Astrocyte of the cerebellum (primary cell): ENCODE measurements at regions of chr3 and their contacts with region 1.

Region 1: DNA sequence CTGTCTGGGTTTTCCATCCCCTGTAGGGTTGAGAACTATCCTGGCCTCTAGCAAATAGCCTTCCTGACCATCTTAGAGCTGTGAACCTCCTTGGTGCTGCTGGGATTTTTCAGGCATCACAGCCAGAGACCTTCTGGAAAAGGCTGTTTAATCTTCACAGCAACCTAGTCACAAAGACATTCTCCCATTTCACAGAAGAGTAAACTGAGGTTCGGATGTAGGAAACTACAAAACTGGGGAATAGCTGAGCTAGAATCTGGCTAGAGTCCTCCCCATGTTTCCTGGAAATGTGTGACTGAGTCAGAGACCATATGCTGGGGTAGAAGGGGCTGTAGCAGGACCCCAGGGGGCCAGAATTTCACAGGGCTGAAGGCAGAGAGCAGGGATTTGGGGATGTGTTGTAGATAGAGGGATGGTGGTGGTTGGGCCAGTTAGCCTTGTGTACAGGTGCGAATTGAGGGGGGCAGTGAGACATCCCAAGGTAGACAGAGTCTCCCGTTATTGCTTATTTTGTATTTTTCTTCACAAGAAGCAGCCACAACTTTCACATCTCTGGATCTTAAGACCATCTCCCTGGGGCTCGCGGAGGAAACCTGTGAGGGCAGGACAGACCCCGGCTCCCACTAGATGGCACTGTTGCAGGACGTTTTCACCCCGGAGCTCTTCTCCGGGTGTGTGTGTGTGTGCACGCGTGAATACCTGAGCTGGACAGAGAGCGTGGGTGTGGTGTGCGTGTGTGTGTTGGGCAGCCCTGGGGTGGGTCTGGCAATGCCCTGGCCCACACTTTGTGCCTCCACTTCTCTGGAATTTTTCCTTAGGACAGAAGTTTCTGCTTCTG is 66.9 kb upstream of the PRR23C start:
- DNase-seq: peak; percentile 23
- H3K4me3 ChIP-seq: no peak overlapping the region
- CTCF ChIP-seq: peak; percentile 95

Region 2: GRCh38 chr3:139319428-139320402 is 208.1 kb after region 1 on chr3:
- in situ Hi-C with region 1: loop called (anchors 10 kb)
- DNase-seq: no peak
- H3K4me3 ChIP-seq: no peak overlapping the region
- CTCF ChIP-seq: peak; percentile 44

Region 3: DNA sequence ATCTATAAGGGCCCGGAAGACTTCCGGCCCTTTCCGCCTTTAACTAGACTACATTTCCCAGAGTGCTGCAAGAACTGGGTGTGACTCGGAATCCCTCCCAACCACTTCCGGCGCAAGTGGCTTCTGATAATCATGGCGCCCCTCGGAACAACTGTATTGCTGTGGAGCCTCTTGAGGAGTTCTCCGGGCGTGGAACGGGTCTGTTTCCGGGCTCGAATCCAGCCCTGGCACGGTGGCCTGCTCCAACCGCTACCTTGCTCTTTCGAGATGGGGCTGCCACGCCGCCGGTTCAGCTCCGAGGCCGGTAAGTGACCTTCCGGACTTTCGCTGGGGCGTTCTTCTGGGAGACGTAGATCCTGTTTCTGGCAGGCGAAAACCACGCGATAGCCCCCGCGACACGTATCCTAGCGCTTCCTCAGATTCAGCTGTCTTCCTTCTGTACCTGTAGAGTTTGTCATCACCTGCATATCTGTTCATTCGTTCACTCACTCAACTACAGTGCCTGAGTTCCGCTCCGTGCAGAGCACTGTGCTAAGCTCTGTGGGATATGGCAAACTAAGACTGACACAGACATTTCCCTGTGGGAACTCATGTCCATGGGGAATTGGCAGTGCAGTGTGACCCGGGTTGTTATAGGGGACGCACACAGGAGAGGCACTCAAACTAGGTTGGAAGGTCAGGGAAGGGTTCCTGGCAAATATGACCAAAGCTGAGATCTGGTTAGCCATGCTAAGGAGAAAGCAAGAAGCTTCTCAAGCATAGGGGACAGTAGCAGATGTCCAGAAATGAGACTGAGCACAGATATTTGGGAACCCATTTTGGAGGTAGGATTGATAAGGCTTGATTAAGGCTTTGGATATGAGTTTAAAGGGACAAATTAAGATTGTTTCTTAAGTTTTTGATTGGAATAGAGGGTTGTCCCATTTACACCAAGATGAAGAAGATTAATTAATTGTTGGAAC is 232.6 kb after region 1 on chr3 and contains the start of gene MRPS22:
- in situ Hi-C with region 1: loop called (anchors 10 kb)
- DNase-seq: peak; percentile 75
- H3K4me3 ChIP-seq: peak within 1 kb of the TSS; percentile 82
- CTCF ChIP-seq: no peak